Natural killer cell (primary cell): ENCODE measurements at regions of chr16 and their contacts with region 1.

Region 1: DNA sequence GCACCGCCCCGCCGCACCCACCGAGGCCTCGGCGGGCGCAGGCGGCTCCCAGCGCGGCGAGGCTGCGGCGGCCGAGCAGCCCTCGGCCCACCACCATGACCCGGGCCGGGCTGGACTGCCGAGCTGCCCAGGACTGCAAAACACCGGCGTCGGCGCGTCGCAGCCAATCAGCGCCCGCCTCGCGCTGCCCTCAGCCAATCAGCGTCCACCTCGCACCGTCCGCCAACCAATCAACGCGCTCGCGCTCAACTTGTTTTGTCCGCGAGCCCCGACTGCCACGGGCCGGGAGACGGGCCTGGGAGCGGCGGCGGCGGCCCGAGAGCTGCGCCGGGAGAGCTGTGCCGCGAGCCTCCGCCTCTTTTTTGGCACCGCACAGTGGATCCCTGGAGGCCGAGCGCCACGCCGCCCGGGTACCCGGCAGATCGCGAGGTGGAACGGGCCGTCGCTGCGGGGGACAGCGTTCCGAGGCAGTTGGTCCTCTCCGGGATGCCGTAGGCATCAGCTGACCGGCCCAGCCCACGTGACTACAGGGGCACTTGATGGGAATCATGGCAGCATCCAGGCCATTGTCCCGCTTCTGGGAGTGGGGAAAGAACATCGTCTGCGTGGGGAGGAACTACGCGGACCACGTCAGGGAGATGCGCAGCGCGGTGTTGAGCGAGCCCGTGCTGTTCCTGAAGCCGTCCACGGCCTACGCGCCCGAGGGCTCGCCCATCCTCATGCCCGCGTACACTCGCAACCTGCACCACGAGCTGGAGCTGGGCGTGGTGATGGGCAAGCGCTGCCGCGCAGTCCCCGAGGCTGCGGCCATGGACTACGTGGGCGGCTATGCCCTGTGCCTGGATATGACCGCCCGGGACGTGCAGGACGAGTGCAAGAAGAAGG is at the starts of genes FAHD1 and HAGH:
- DNase-seq: peak; percentile 95 to 96
- ATAC-seq: peak; percentile 79 to 92 (median 84)
- H3K4me3 ChIP-seq: peak within 1 kb of the TSS; percentile 98
- H3K4me3 Mint-ChIP-seq: peak within 1 kb of the TSS; percentile 89
- H3K27ac ChIP-seq: peak within 1 kb of the TSS; percentile 60
- H3K27ac Mint-ChIP-seq: peak within 1 kb of the TSS; percentile 85 to 89
- H3K4me1 ChIP-seq: peaks cover 23% of the 10 kb centered on the region
- H3K4me1 Mint-ChIP-seq: peaks cover 9 to 23% of the 10 kb centered on the region in 2 donors
- H3K27me3 ChIP-seq: no peaks in the 10 kb centered on the region
- H3K27me3 Mint-ChIP-seq: no peaks in the 10 kb centered on the region
- CTCF ChIP-seq: no peak
- total RNA-seq, gene FAHD1: 5.3 to 10.6 (median 7.4) TPM
- total RNA-seq, gene HAGH: 27.8 to 38.4 (median 37.5) TPM

Region 2: GRCh38 chr16:1782352-1783091 is 44.4 kb before region 1 on chr16 and contains the starts of genes NUBP2 and SPSB3:
- intact Hi-C with region 1: loop called (anchors 2 kb)
- DNase-seq: peak; percentile 97 to 99
- ATAC-seq: peak; percentile 86 to 94 (median 86)
- H3K4me3 ChIP-seq: peak within 1 kb of the TSS; percentile 61
- H3K4me3 Mint-ChIP-seq: peak within 1 kb of the TSS; percentile 89
- H3K27ac ChIP-seq: peak within 1 kb of the TSS; percentile 61
- H3K27ac Mint-ChIP-seq: peak within 1 kb of the TSS; percentile 88 to 92
- H3K4me1 ChIP-seq: peaks cover 49% of the 10 kb centered on the region
- H3K4me1 Mint-ChIP-seq: peaks cover 10 to 22% of the 10 kb centered on the region in 2 donors
- H3K27me3 ChIP-seq: no peaks in the 10 kb centered on the region
- H3K27me3 Mint-ChIP-seq: no peaks in the 10 kb centered on the region
- CTCF ChIP-seq: no peak
- total RNA-seq, gene NUBP2: 39.5 to 51.9 (median 49.4) TPM
- total RNA-seq, gene SPSB3: 100 to 122 (median 110) TPM